ENCODE measurements at regions of chr11 and their contacts with region 1.

Region 1: DNA sequence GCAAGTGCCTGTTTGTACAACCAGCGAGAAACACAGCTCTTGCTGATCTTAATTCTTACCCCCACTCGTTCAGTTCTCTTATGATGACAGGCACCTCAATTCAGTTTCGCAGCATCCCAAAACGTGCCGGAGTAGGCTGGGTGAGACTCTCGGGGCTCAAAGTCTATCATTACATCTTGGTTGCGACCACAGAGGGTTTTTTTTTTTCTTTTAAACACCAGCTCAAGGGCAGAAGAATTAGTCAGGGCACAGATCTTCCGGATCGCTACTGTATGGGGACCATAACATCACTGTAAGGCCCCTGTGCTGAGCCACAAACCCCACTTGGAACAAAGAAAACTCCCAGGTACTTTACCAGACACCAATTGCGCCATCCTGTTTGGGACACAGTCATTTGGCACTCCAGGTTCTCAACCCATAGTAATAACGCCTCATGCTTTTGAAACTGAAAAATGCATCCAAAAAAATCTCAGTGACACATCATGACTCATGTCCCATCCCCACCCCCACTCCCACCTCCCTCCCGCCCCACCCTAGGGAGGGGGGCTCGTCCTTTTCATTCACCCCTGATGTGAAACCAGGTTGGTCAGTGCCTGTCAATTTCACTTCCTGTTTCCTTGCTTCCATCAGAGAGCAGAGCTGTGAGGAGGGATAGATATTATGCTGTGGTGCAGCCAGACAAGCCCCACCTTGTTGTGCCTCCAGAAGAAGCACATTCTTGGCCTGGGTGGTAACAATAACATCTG is 41.0 kb upstream of the CD5 start:
- DNase-seq: peak; percentile 45
- ATAC-seq: peak; percentile 88
- H3K4me3 Mint-ChIP-seq: peak overlapping the region; percentile 75
- H3K27ac Mint-ChIP-seq: peak overlapping the region; percentile 95
- H3K4me1 Mint-ChIP-seq: peaks cover 40% of the 10 kb centered on the region
- H3K27me3 Mint-ChIP-seq: no peaks in the 10 kb centered on the region
- CTCF ChIP-seq: no peak

Region 2: GRCh38 chr11:60924110-60924905 is 136.9 kb before region 1 on chr11 and contains the start of gene TMEM132A:
- CTCF ChIA-PET with region 1: no interaction called
- POLR2A ChIA-PET with region 1: interaction called, 14 read pairs
- intact Hi-C with region 1: no loop called
- DNase-seq: no peak
- ATAC-seq: peak; percentile 27
- H3K4me3 Mint-ChIP-seq: peak within 1 kb of the TSS; percentile 69
- H3K27ac Mint-ChIP-seq: no peak within 1 kb of the TSS
- H3K4me1 Mint-ChIP-seq: peaks cover 33% of the 10 kb centered on the region
- H3K27me3 Mint-ChIP-seq: peaks cover 4% of the 10 kb centered on the region
- CTCF ChIP-seq: no peak
- total RNA-seq, gene TMEM132A: 8.2 and 8.7 TPM in 2 replicates

Region 3: DNA sequence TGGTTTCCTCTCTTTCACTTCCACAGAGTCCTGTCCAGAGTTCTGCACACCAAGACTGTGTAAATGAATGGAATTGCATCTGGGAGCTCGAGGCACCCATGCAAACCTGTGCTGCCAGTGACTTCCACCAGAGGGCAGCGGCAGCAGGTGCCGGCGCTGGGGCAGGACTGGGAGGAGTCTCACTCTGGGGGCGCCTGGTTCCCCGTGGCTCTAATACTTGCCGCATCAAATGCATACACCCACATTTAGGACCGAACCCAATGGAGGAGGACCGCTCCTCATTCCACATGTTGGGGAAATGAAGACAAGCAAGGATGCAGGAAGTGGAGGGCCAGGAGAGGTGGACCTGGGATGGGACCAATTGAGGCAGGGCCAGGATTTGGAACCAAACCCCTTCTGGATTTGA is 90.9 kb before region 1 on chr11:
- CTCF ChIA-PET with region 1: interaction called, 3 read pairs
- POLR2A ChIA-PET with region 1: interaction called, 5 read pairs
- intact Hi-C with region 1: loop called (anchors 1 kb)
- DNase-seq: peak; percentile 68
- ATAC-seq: peak; percentile 91
- H3K4me3 Mint-ChIP-seq: no peak overlapping the region
- H3K27ac Mint-ChIP-seq: peak overlapping the region; percentile 32
- H3K4me1 Mint-ChIP-seq: peaks cover 31% of the 10 kb centered on the region
- H3K27me3 Mint-ChIP-seq: no peaks in the 10 kb centered on the region
- CTCF ChIP-seq: peak; percentile 88

Region 4: GRCh38 chr11:61021661-61022212 is 39.5 kb before region 1 on chr11:
- CTCF ChIA-PET with region 1: no interaction called
- POLR2A ChIA-PET with region 1: interaction called, 8 read pairs
- intact Hi-C with region 1: loop called (anchors 1 kb)
- DNase-seq: peak; percentile 62
- ATAC-seq: peak; percentile 86
- H3K4me3 Mint-ChIP-seq: peak overlapping the region; percentile 74
- H3K27ac Mint-ChIP-seq: peak overlapping the region; percentile 83
- H3K4me1 Mint-ChIP-seq: peaks cover 56% of the 10 kb centered on the region
- H3K27me3 Mint-ChIP-seq: no peaks in the 10 kb centered on the region
- CTCF ChIP-seq: no peak

Region 5: GRCh38 chr11:61041755-61042518 is 19.3 kb before region 1 on chr11:
- CTCF ChIA-PET with region 1: interaction called, 3 read pairs
- POLR2A ChIA-PET with region 1: interaction called, 11 read pairs
- intact Hi-C with region 1: loop called (anchors 2 kb)
- DNase-seq: no peak
- ATAC-seq: peak; percentile 91
- H3K4me3 Mint-ChIP-seq: peak overlapping the region; percentile 75
- H3K27ac Mint-ChIP-seq: peak overlapping the region; percentile 78
- H3K4me1 Mint-ChIP-seq: peaks cover 32% of the 10 kb centered on the region
- H3K27me3 Mint-ChIP-seq: no peaks in the 10 kb centered on the region
- CTCF ChIP-seq: no peak

Region 6: GRCh38 chr11:61102667-61103571 is 41.7 kb after region 1 on chr11:
- CTCF ChIA-PET with region 1: no interaction called
- POLR2A ChIA-PET with region 1: interaction called, 10 read pairs
- intact Hi-C with region 1: loop called (anchors 1 kb)
- DNase-seq: no peak
- ATAC-seq: no peak
- H3K4me3 Mint-ChIP-seq: peak overlapping the region; percentile 42
- H3K27ac Mint-ChIP-seq: peak overlapping the region; percentile 0
- H3K4me1 Mint-ChIP-seq: peaks cover 10% of the 10 kb centered on the region
- H3K27me3 Mint-ChIP-seq: no peaks in the 10 kb centered on the region
- CTCF ChIP-seq: no peak

Region 7: GRCh38 chr11:61152816-61153592 is 91.8 kb after region 1 on chr11:
- CTCF ChIA-PET with region 1: no interaction called
- POLR2A ChIA-PET with region 1: no interaction called
- intact Hi-C with region 1: no loop called
- DNase-seq: no peak
- ATAC-seq: no peak
- H3K4me3 Mint-ChIP-seq: no peak overlapping the region
- H3K27ac Mint-ChIP-seq: no peak overlapping the region
- H3K4me1 Mint-ChIP-seq: peaks cover 19% of the 10 kb centered on the region
- H3K27me3 Mint-ChIP-seq: no peaks in the 10 kb centered on the region
- CTCF ChIP-seq: no peak

Measured in activated B cell treated with CpG ODN at 0.5 μM for 24 hours (primary cell).